ENCODE measurements at regions of chr11 and their contacts with region 1.

Region 1: DNA sequence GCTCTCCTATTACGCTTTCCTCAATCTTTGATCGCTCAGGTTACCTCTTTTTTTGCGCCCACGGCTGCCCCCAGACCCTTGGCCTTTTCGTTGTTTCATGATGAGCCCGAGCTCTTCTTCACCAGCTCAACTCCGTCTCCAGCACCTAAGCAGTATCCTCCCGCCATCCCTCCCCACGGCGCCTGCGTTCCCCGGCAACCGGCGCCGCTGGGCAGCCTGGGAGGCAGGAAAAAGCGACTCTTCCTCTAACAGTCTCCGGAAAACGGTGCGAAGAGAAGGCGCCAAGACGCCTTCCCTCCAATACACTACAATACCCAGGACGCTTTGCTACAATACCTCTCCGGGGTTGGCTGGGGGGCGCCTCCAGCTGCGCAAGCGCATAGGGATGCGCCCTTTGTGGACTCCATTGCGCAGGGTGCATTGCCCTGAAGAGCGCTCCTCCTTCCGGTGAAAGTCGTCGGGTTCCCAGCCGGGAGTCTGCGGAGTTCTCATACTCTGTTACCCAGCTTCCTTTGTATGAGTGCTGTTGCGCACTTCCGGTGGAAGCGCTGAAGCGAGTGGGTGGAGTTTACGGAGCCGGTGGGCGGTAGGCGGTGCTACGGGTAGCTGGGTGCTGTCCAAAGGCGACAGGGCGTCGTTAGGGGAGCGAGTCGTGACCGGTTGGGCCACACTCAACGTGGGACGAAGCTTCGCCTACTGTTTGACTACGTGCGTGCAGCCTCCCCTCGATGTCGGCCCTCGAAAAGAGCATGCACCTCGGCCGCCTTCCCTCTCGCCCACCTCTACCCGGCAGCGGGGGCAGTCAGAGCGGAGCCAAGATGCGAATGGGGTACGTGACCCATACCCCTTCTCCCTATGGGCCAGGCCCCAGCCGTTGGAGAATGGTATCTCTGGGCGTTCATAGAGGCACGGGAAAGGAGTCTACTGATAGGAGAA is at the starts of genes C2CD3 and PPME1:
- DNase-seq: peak; percentile 83 to 99 (median 98)
- ATAC-seq: peak; percentile 96
- H3K4me3 ChIP-seq: peak within 1 kb of the TSS; percentile 73
- H3K4me3 Mint-ChIP-seq: no peak within 1 kb of the TSS
- H3K27ac ChIP-seq: peak within 1 kb of the TSS; percentile 76
- H3K27ac Mint-ChIP-seq: no peak within 1 kb of the TSS
- H3K4me1 ChIP-seq: peaks cover 30 to 32% of the 10 kb centered on the region in 2 donors
- H3K4me1 Mint-ChIP-seq: peaks cover 5 to 32% (median 18%) of the 10 kb centered on the region in 7 donors
- H3K27me3 ChIP-seq: no peaks in the 10 kb centered on the region
- H3K27me3 Mint-ChIP-seq: no peaks in the 10 kb centered on the region
- total RNA-seq, gene C2CD3: 33.1 to 42.5 (median 40.7) TPM
- total RNA-seq, gene PPME1: 18.1 to 41.7 (median 20.2) TPM

Region 2: DNA sequence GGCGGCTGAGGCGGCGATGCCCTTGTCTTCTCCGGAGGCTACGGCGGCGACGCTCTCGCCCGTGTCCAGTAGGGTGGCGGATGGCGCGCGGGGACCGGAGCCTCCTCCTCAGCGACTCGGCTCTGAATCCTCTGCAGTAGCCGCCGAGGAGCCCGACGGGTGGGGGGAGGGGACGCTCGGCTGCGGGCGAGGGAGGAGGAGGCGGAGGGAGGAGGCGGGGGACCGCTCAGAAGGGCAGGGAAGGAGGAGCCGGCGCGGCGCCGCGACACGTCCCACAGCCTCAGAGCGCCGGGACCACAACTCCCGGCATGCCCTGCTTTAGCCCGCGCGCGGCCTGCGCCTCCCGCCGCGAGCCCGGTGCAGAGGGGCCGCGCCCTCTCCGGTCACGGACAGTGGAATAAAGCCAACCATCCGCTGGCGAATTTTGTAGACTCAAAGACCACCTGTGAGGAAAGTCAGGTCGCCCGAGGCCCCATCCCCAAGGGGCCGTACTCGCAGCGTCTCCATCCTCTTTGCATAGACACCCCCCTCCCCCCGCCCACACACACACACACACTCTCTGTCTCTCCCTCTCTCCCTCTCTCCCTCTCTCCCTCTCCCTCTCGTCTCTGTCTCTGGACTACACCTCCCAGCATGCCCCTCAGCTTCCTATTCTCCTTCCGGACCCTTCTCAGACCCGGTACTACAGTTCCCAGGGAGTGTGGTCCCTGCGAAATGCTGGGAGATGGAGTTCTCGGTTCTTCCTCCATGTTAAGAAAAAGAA is 572.8 kb before region 1 on chr11 and contains the start of gene FAM168A:
- CTCF ChIA-PET with region 1: no interaction called
- POLR2A ChIA-PET with region 1: no interaction called
- intact Hi-C with region 1: loop called in 1 of 2 experiments (anchors 1 kb)
- DNase-seq: peak; percentile 82 to 92 (median 89)
- ATAC-seq: peak; percentile 96
- H3K4me3 ChIP-seq: peak within 1 kb of the TSS; percentile 71
- H3K4me3 Mint-ChIP-seq: peak within 1 kb of the TSS; percentile 90 to 97 (median 95)
- H3K27ac ChIP-seq: peak within 1 kb of the TSS; percentile 87
- H3K27ac Mint-ChIP-seq: peak within 1 kb of the TSS; percentile 91 to 97 (median 95)
- H3K4me1 ChIP-seq: peaks cover 12 to 13% of the 10 kb centered on the region in 2 donors
- H3K4me1 Mint-ChIP-seq: peaks cover 19 to 48% (median 46%) of the 10 kb centered on the region in 7 donors
- H3K27me3 ChIP-seq: no peaks in the 10 kb centered on the region
- H3K27me3 Mint-ChIP-seq: peaks cover 0 to 2% (median 0%) of the 10 kb centered on the region in 5 donors
- total RNA-seq, gene FAM168A: 18.4 to 33.0 (median 25.2) TPM

Region 3: DNA sequence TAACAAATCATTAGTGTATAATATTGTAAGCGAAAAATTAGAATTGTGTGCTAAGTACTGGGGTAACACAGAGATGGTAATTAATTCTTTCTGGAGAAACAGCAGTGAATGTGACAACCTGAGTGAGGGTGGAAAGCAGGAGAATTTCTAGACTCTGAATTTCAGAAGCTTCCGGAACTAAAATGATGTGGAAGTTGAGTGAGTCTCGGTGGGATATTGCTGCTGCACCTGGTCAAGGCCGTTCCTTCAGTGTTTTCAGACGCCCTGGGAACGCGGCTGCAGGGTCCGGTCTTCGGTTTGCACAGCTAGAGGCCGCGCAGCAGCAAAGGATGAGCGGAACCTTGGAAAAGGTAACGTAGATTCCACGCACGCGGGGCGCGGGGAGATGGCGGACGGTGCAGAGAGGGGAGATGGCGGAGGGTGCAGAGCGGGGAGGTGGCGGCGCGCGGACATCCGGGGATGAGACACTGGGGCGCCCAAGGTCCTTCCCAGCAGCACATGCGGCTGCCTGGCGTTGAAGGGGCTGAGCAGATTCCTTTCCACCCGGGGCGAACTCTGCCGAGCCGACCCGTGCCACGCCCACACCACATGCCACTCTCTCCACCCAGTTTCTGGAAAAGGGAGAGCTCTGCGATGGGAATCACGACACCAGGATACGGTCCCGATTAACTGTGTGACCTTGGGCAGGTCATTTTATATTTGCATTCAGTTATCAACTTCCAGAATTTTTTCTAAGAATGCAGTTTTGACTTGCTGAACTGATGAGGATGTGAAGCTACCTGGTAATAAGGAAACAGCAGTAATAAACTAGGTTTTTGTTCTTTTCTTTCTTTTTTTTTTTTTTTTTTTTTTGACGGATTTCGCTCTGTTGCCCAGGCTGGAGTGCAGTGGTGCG is 383.1 kb before region 1 on chr11 and contains the start of gene MRPL48:
- CTCF ChIA-PET with region 1: no interaction called
- POLR2A ChIA-PET with region 1: no interaction called
- intact Hi-C with region 1: loop called (anchors 1 to 2 kb)
- DNase-seq: peak; percentile 74 to 90 (median 86)
- ATAC-seq: peak; percentile 100
- H3K4me3 ChIP-seq: peak within 1 kb of the TSS; percentile 94
- H3K4me3 Mint-ChIP-seq: peak within 1 kb of the TSS; percentile 92 to 100 (median 98)
- H3K27ac ChIP-seq: peak within 1 kb of the TSS; percentile 81
- H3K27ac Mint-ChIP-seq: peak within 1 kb of the TSS; percentile 93 to 100 (median 99)
- H3K4me1 ChIP-seq: peaks cover 10 to 13% of the 10 kb centered on the region in 2 donors
- H3K4me1 Mint-ChIP-seq: peaks cover 7 to 43% (median 30%) of the 10 kb centered on the region in 7 donors
- H3K27me3 ChIP-seq: no peaks in the 10 kb centered on the region
- H3K27me3 Mint-ChIP-seq: no peaks in the 10 kb centered on the region
- total RNA-seq, gene MRPL48: 20.3 to 50.6 (median 25.5) TPM

Region 4: DNA sequence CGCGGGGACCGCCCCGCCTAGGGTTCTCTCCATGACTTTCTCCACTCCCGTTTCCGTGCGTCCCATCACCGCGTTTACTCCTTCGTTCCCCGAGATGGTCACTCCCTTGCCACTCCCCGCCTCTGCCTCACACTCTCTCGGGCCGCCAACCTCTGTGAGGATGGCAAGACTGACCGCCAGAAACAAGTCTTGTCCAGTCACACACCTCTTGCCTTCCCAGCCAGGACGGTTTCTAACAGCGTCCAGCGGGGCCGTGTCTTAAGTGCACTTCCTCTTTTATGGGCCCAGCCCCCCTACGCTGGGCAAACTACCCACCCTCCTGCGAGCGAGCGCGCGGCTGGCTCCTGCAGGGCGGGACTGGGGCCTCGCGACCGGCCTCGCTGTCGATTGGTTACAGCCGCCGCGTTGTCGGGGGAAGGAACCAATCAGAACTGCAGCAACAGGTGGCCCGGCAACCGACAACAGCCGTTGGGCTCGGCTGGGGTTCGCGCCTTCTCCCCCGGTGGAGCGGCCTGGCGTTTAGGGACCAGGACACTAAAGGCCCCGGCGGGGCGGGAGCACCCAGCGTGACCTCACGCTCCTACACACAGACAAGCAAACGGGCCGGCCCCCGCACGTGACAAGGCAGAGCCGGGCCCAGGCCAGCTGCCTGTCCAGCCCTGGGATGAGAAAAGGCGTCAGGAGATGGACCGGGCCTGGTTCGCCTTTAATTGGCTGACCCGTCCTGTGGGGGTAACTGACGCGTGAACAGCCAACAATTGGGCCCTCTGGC is 187.8 kb before region 1 on chr11:
- CTCF ChIA-PET with region 1: no interaction called
- POLR2A ChIA-PET with region 1: interaction called, 3 read pairs
- intact Hi-C with region 1: loop called (anchors 1 kb)
- DNase-seq: peak; percentile 83 to 94 (median 92)
- ATAC-seq: peak; percentile 86
- H3K4me3 ChIP-seq: peak overlapping the region; percentile 93
- H3K4me3 Mint-ChIP-seq: peak overlapping the region; percentile 93 to 100 (median 99)
- H3K27ac ChIP-seq: peak overlapping the region; percentile 96
- H3K27ac Mint-ChIP-seq: peak overlapping the region; percentile 98 to 100 (median 99)
- H3K4me1 ChIP-seq: peaks cover 26 to 31% of the 10 kb centered on the region in 2 donors
- H3K4me1 Mint-ChIP-seq: peaks cover 29 to 55% (median 44%) of the 10 kb centered on the region in 7 donors
- H3K27me3 ChIP-seq: no peaks in the 10 kb centered on the region
- H3K27me3 Mint-ChIP-seq: no peaks in the 10 kb centered on the region

Region 5: GRCh38 chr11:74492974-74493790 is 322.2 kb after region 1 on chr11 and contains the start of gene LIPT2:
- CTCF ChIA-PET with region 1: no interaction called
- POLR2A ChIA-PET with region 1: interaction called, 7 read pairs
- intact Hi-C with region 1: loop called (anchors 1 kb)
- DNase-seq: peak; percentile 92 to 98 (median 96)
- ATAC-seq: peak; percentile 97
- H3K4me3 ChIP-seq: peak within 1 kb of the TSS; percentile 90
- H3K4me3 Mint-ChIP-seq: peak within 1 kb of the TSS; percentile 74 to 92 (median 86)
- H3K27ac ChIP-seq: peak within 1 kb of the TSS; percentile 95
- H3K27ac Mint-ChIP-seq: peak within 1 kb of the TSS; percentile 73 to 96 (median 89)
- H3K4me1 ChIP-seq: peaks cover 8 to 10% of the 10 kb centered on the region in 2 donors
- H3K4me1 Mint-ChIP-seq: peaks cover 14 to 43% (median 28%) of the 10 kb centered on the region in 7 donors
- H3K27me3 ChIP-seq: no peaks in the 10 kb centered on the region
- H3K27me3 Mint-ChIP-seq: no peaks in the 10 kb centered on the region
- total RNA-seq, gene LIPT2: 1.9 to 18.2 (median 9.3) TPM

Region 6: DNA sequence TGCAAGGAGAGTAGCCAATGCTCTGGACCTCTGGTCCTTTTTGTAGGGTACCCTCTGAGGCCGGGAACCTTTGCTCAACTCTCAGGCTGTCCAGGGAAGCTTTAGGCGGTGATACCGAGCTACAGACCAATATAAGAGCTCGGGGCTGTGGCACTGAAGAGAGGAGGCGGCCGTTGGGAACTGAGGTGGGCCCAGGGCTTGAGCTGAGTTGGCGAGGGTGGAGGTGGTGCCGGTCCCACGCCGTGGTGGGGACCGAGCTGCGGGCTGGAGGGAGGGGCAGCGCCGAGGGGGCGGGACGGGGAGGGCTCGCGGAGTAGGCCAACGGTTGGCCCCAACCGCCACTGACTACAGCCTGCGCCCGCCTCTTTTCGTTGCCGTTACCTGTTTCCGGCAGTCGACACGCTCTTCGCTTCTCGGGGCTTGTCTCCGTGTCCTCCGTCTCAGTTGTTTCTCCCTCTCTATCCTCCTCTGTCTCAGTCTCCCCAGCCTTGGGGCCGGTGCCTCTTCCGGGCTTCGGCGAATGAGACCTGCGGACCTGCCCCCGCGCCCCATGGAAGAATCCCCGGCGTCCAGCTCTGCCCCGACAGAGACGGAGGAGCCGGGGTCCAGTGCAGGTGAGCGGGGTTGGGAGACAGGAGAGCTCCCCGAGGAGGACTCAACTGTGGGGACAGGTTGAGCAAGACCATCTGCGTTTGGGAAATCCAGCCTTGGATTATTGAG is 817.7 kb after region 1 on chr11 and contains the start of gene NEU3:
- CTCF ChIA-PET with region 1: no interaction called
- POLR2A ChIA-PET with region 1: no interaction called
- intact Hi-C with region 1: loop called in 1 of 2 experiments (anchors 5 kb)
- DNase-seq: peak; percentile 64 to 82 (median 78)
- ATAC-seq: peak; percentile 97
- H3K4me3 ChIP-seq: peak within 1 kb of the TSS; percentile 96
- H3K4me3 Mint-ChIP-seq: peak within 1 kb of the TSS; percentile 88 to 97 (median 93)
- H3K27ac ChIP-seq: peak within 1 kb of the TSS; percentile 81
- H3K27ac Mint-ChIP-seq: peak within 1 kb of the TSS; percentile 75 to 94 (median 89)
- H3K4me1 ChIP-seq: peaks cover 8 to 16% of the 10 kb centered on the region in 2 donors
- H3K4me1 Mint-ChIP-seq: peaks cover 16 to 37% (median 31%) of the 10 kb centered on the region in 7 donors
- H3K27me3 ChIP-seq: no peaks in the 10 kb centered on the region
- H3K27me3 Mint-ChIP-seq: no peaks in the 10 kb centered on the region
- total RNA-seq, gene NEU3: 12.6 to 18.9 (median 16.1) TPM

Measured in naive thymus-derived CD4-positive, alpha-beta T cell (primary cell).